ENCODE measurements at regions of chr6 and their contacts with region 1.

Region 1: GRCh38 chr6:149028767-149029405 is 282.1 kb downstream of the UST start:
- DNase-seq: peak; percentile 55
- H3K4me3 Mint-ChIP-seq: no peak overlapping the region
- H3K27ac Mint-ChIP-seq: peak overlapping the region; percentile 75
- H3K4me1 Mint-ChIP-seq: peaks cover 44% of the 10 kb centered on the region
- H3K27me3 Mint-ChIP-seq: no peaks in the 10 kb centered on the region

Region 2: GRCh38 chr6:148760568-148761526 is 268.0 kb before region 1 on chr6:
- intact Hi-C with region 1: loop called (anchors 2 kb)
- DNase-seq: peak; percentile 40
- H3K4me3 Mint-ChIP-seq: peak overlapping the region; percentile 73
- H3K27ac Mint-ChIP-seq: peak overlapping the region; percentile 81
- H3K4me1 Mint-ChIP-seq: peaks cover 53% of the 10 kb centered on the region
- H3K27me3 Mint-ChIP-seq: peaks cover 53% of the 10 kb centered on the region

Region 3: GRCh38 chr6:149075616-149076364 is 46.9 kb after region 1 on chr6:
- intact Hi-C with region 1: loop called (anchors 1 kb)
- DNase-seq: no peak
- H3K4me3 Mint-ChIP-seq: no peak overlapping the region
- H3K27ac Mint-ChIP-seq: peak overlapping the region; percentile 85
- H3K4me1 Mint-ChIP-seq: peaks cover 48% of the 10 kb centered on the region
- H3K27me3 Mint-ChIP-seq: no peaks in the 10 kb centered on the region

Region 4: GRCh38 chr6:149140137-149140909 is 111.4 kb after region 1 on chr6:
- intact Hi-C with region 1: loop called (anchors 1 kb)
- DNase-seq: no peak
- H3K4me3 Mint-ChIP-seq: peak overlapping the region; percentile 84
- H3K27ac Mint-ChIP-seq: peak overlapping the region; percentile 100
- H3K4me1 Mint-ChIP-seq: peaks cover 46% of the 10 kb centered on the region
- H3K27me3 Mint-ChIP-seq: no peaks in the 10 kb centered on the region

Region 5: DNA sequence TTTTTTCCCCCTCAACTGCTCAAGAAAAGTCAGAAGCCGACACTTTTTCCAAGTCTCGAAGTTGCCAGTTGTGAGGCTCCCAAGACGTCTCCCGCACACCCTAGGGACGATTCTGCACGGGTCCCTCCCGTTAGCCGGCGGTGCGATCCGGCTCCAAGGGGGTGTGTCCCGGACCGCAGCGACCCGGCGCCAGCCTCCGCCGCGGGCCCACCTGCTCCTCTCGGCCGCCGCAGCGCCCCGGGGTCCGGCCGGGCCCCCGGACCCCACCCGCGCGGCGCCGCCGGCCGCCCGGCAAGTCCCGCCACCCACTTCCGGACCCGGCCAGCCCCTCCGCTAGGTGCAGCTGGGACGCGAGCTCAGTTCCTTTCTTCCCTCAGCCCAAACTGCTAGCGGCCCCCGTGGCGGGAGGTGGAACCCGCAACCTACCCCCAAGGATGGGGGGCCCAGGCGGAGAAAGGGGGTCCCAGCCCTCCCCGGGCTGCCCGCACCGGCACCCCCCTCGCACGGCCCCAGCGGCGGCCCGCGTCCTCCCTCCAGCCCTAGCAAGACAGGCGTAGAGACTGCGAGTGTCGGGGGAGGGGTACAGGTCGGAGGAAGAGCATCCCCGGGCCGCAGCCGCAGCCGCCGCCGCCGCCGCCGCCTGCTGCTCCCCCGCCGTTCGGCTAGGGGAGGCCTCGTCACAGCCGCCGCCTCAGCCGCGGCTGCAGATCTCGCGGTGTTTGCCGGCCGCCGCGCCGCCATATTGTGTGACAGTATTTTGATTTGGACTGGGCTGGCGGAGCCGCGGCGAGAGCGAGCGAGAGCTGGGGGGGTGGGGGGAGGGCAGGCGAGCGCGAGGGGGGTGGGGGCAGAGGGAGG is 288.1 kb after region 1 on chr6:
- intact Hi-C with region 1: loop called (anchors 1 kb)
- DNase-seq: peak; percentile 91
- H3K4me3 Mint-ChIP-seq: peak overlapping the region; percentile 95
- H3K27ac Mint-ChIP-seq: peak overlapping the region; percentile 85
- H3K4me1 Mint-ChIP-seq: peaks cover 44% of the 10 kb centered on the region
- H3K27me3 Mint-ChIP-seq: no peaks in the 10 kb centered on the region

Region 6: DNA sequence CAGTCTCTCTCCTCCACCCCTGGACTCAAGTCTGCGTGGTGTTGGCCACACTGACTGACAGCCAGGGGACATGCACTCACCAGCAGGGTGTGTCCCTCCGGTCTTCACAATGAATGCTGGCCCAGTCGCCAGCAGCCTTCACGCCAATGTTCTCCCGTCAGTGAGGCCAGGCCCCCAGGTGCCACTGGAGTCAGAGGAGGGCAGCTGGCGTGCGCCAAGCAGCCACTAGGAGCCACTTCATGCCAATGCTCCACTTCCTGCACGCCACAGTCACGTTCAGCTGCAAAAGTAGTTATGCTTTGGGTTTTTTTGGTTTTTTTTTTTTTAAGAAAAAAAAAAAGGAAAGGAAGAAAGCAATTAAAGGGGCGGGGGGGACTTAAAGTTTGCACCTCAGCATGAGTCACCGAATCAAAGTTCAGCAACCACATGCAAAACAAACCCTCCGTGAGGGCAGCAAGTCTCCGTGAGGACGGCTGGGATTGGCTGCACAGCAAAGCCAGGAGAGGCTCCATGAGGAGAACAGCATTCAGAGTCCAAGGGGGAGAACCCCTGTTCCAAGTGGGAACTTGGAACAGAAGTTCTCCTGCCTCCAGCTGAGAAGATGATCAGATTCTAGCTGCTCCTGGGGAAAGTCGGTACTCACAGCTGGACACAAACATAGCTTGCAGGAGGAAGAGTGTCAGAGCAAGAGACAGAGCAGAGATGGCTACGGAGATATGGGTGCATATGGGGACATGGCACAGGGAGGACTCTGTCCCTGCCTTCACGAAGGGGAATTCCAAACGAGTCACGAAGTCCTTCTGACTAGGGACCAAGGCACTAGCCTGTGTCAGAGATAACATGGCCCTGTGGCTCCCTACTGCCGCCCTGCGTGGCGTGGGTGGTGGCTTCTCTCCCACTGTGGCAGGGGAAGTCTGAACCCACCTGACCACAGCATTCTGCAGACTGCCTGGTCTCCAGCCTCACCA is 456.1 kb after region 1 on chr6 and contains the start of gene ZC3H12D:
- intact Hi-C with region 1: loop called (anchors 1 kb)
- DNase-seq: peak; percentile 70
- H3K4me3 Mint-ChIP-seq: peak within 1 kb of the TSS; percentile 79
- H3K27ac Mint-ChIP-seq: peak within 1 kb of the TSS; percentile 99
- H3K4me1 Mint-ChIP-seq: peaks cover 53% of the 10 kb centered on the region
- H3K27me3 Mint-ChIP-seq: no peaks in the 10 kb centered on the region
- total RNA-seq, gene ZC3H12D: 15.0 and 15.6 TPM in 2 replicates